ENCODE measurements at regions of chr17 and their contacts with region 1.

Region 1: GRCh38 chr17:17681187-17681848 is at the start of gene RAI1:
- DNase-seq: peak; percentile 94
- H3K4me3 ChIP-seq: peak within 1 kb of the TSS; percentile 75
- H3K27ac ChIP-seq: peak within 1 kb of the TSS; percentile 96
- H3K4me1 ChIP-seq: peaks cover 24% of the 10 kb centered on the region
- H3K27me3 ChIP-seq: no peaks in the 10 kb centered on the region
- total RNA-seq, gene RAI1: 9.1 and 17.8 TPM in 2 replicates

Region 2: GRCh38 chr17:17812211-17813057 is 131.1 kb after region 1 on chr17:
- in situ Hi-C with region 1: no loop called
- DNase-seq: peak; percentile 66
- H3K4me3 ChIP-seq: no peak overlapping the region
- H3K27ac ChIP-seq: no peak overlapping the region
- H3K4me1 ChIP-seq: no peaks in the 10 kb centered on the region
- H3K27me3 ChIP-seq: no peaks in the 10 kb centered on the region

Region 3: DNA sequence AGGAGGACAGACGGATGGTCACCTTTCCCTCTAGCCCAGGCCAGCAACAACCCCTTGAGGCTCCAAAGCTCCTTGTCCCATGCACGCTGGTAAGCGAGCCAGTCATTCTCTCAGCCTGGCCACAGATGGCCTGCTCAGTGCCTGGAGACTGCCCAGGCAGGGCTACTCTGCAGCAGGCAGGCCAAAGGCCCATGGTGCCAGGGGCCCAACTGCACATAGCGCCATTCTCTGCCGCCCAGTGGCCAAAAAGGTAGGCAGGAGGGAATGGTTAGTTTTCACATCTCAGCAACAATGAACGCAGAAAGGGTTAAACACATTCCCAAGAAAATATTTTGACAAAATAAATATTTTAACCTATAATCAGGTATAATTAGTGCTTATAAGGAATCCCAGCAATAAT is 163.2 kb after region 1 on chr17:
- in situ Hi-C with region 1: no loop called
- DNase-seq: no peak
- H3K4me3 ChIP-seq: no peak overlapping the region
- H3K27ac ChIP-seq: no peak overlapping the region
- H3K4me1 ChIP-seq: peaks cover 22% of the 10 kb centered on the region
- H3K27me3 ChIP-seq: no peaks in the 10 kb centered on the region

Region 4: DNA sequence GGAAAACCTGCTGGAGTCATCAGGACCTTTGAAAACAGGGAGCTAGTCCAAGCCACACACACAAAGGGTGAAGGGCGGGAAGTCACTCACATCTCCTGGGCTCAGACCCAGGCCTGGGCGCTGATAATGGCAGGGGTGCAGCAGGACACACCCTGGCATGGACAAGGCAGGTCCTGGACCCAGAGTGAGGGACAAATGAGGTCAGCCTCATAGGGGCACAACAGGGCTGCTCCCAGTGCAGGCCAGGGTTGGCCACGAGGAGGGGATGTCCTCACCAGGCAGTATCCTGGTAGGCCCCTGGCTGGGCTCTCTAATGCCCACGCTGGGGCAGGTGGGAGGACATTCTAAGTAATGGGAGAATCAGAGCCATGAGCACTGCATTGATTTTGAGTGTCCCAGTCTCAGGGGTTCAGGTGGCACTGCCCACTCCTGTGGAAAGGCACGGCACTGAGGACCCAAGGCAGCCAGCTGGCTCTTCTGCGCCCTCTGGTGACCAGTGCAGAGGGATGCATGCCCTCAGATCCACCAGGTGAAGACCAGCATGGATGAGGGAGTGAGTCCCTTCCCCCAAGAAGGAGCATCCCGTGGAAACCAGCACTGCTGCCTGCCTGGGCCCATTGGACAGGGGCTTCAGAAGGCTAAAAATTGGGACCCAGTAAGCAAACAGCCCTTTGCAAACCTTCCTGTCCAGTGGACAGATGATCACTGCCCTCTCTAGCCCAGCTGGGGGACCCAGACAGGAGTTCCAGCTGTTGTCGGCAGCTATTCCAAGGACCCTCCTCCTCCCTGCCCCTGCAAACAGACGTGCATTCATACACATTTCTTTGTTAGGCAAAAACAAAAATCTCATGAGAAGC is 178.8 kb after region 1 on chr17:
- in situ Hi-C with region 1: loop called (anchors 25 kb)
- DNase-seq: peak; percentile 70
- H3K4me3 ChIP-seq: no peak overlapping the region
- H3K27ac ChIP-seq: no peak overlapping the region
- H3K4me1 ChIP-seq: peaks cover 10% of the 10 kb centered on the region; the same call in 1 of the 2 replicates
- H3K27me3 ChIP-seq: no peaks in the 10 kb centered on the region

Region 5: DNA sequence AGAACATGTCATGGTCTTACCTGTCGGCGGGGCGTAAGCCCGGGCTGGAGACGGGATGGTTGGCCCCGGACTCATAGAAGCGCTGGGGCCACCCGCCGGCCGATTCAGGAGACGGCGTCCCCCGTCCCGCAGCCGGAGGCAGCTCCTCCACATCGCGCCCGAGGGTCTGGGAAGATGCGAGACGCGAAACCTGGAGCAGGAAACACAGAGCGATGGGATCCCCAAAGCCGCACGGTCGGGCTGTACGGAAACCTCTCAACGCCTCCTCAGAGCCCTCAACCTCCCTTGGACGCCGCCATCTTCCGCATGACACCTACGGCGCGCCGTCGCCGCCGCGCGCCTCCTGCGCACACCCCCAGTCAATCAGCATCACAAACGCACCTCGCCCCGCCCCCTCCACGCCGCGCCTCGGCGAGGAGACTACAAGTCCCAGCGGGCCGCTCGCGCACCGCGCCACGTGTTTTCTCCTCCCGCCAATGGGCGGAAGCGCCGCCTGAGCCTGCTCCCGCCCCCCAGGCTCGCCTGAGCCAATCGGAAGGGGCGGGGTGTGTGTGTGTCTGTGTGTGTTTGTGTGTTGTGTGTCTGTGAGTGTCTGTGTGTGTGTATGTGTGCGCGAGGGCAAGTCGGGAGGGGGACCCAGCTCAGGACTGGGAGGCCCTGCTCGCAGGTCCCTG is 357.7 kb after region 1 on chr17 and contains the starts of genes ATPAF2 and GID4:
- in situ Hi-C with region 1: loop called (anchors 25 kb)
- DNase-seq: peak; percentile 100
- H3K4me3 ChIP-seq: peak within 1 kb of the TSS; percentile 86
- H3K27ac ChIP-seq: peak within 1 kb of the TSS; percentile 37
- H3K4me1 ChIP-seq: peaks cover 31% of the 10 kb centered on the region
- H3K27me3 ChIP-seq: no peaks in the 10 kb centered on the region
- total RNA-seq, gene ATPAF2: 17.0 and 37.6 TPM in 2 replicates
- total RNA-seq, gene GID4: 8.0 and 10.2 TPM in 2 replicates